ENCODE measurements at regions of chr11 and their contacts with region 1.

Region 1: GRCh38 chr11:100687630-100688395 is 725 bp downstream of the ARHGAP42 start:
- DNase-seq: peak; percentile 30
- H3K4me3 ChIP-seq: peak overlapping the region; percentile 53
- H3K27me3 ChIP-seq: no peaks in the 10 kb centered on the region
- CTCF ChIP-seq: peak; percentile 75

Region 2: DNA sequence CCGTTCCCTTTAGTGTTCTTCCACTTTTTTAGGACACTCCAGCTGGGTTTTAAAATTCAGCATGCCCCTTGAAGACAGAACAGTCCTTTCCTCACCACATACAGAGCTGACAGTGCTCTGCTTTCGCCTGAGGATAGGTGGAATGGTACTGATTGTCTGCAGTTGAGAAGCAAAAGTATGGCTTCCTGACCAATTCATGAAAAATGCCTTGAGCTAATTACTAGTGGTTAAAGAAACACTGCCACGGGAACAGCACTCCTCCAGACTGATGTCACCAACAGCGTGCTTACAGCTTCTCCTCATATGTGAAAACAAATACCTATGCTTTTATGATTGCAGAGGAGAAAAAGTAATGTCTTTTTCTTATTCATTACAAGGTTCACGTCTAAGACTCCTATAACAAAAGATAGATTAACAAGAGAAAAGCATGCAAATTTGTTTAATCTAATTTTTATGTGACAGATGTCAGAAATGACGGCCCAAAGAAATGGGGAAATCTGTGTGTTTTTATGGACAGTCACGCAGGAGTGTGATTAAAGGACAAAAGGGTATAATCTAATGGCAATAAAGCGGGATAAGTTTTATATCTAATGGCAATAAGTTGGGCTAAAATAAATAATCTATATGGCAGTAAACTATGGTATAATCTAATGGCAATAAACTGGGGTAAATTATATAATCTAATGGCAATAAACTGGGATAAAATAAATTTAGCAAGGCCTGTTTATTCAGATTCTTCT is 124.1 kb before region 1 on chr11:
- CTCF ChIA-PET with region 1: no interaction called
- POLR2A ChIA-PET with region 1: no interaction called
- DNase-seq: peak; percentile 45
- H3K4me3 ChIP-seq: no peak overlapping the region
- H3K27me3 ChIP-seq: no peaks in the 10 kb centered on the region
- CTCF ChIP-seq: no peak

Region 3: DNA sequence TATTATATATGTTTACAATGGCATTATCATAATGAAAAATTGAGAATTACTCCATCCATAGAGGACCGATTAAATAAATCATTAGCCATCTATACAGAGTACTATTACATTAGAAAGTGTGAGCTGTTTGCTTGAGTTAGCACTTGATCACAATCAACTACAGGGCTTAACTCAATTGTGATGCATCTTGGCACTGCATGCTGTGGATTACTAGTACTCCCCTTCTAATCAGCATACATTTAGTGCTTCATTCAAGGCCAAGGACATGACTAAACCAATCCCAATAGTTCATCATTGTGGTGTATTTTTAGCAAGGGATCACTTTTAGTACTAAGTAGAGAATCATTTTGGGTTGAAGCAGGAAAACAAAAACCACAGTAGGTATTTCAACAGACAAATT is 24.2 kb before region 1 on chr11:
- CTCF ChIA-PET with region 1: no interaction called
- POLR2A ChIA-PET with region 1: no interaction called
- DNase-seq: no peak
- H3K4me3 ChIP-seq: no peak overlapping the region
- H3K27me3 ChIP-seq: no peaks in the 10 kb centered on the region
- CTCF ChIP-seq: no peak

Region 4: DNA sequence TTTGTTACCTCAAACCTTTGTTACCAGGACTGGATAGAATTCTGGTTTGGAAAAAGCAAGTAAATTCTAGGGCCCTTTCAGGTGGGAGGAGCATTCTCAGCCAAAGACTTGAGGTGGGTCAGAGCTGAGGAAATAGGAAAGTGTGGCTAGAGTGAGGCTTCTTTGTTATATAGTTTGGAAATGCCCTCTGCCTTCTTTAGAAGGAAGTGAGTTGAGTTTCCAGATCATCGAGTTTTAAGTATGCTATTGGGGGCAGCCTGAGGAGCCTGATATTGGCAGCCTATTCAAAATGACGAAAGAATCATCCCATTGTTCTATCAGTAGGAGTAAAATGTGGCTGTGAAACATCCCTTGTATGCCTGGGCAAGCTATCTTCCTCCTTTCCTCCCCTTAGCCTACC is 133.4 kb after region 1 on chr11:
- CTCF ChIA-PET with region 1: interaction called, 13 read pairs
- POLR2A ChIA-PET with region 1: no interaction called
- DNase-seq: no peak
- H3K4me3 ChIP-seq: no peak overlapping the region
- H3K27me3 ChIP-seq: peaks cover 2% of the 10 kb centered on the region; the same call in 1 of the 2 replicates
- CTCF ChIP-seq: no peak